CD8-positive, alpha-beta T cell (primary cell): ENCODE measurements at regions of chr7 and their contacts with region 1.

Region 1: DNA sequence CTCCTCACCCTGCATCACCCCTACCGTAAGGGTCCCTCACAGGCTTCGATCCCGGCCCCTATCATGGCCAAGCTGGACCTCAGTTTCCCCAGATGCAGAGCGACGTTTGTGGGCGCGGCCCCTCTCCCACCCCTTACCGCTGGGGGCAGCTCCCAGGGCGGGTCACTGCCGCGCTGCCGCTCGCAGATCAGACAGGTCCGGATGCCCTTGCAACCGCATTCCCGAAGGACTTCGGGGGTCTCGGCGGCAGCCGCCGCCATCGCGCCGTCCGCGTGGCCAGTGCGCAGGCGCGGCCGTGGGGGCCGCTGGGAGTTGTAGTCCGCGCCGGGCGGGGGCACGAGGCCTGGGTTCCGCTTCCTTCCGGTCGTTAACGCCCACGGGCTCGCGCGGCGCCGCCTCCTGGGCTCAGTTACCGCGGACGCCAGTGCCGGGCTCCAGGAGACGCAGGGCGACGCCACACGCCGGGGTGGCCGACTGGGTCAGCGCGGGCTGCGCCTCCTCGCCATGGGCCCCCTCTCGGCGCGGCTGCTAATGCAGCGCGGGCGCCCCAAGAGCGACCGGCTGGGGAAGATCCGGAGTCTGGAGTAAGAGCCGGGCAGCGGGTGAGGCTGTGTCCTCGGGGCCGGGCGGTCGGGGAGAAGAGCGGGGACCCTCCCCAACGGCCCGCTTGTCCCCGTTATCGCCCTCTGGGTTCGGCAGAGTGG is at the starts of genes ALKBH4 and LRWD1:
- DNase-seq: peak; percentile 86 to 97 (median 93)
- ATAC-seq: peak; percentile 96
- H3K4me3 ChIP-seq: peak within 1 kb of the TSS; percentile 99 to 100
- H3K4me3 Mint-ChIP-seq: peak within 1 kb of the TSS; percentile 91
- H3K27ac ChIP-seq: peak within 1 kb of the TSS; percentile 71 to 72
- H3K27ac Mint-ChIP-seq: peak within 1 kb of the TSS; percentile 62
- H3K4me1 ChIP-seq: peaks cover 21% of the 10 kb centered on the region
- H3K4me1 Mint-ChIP-seq: peaks cover 40% of the 10 kb centered on the region
- H3K27me3 ChIP-seq: no peaks in the 10 kb centered on the region
- H3K27me3 Mint-ChIP-seq: no peaks in the 10 kb centered on the region
- CTCF ChIP-seq: no peak
- total RNA-seq, gene ALKBH4: 4.4 to 5.2 TPM
- total RNA-seq, gene LRWD1: 14.9 to 19.1 TPM

Region 2: DNA sequence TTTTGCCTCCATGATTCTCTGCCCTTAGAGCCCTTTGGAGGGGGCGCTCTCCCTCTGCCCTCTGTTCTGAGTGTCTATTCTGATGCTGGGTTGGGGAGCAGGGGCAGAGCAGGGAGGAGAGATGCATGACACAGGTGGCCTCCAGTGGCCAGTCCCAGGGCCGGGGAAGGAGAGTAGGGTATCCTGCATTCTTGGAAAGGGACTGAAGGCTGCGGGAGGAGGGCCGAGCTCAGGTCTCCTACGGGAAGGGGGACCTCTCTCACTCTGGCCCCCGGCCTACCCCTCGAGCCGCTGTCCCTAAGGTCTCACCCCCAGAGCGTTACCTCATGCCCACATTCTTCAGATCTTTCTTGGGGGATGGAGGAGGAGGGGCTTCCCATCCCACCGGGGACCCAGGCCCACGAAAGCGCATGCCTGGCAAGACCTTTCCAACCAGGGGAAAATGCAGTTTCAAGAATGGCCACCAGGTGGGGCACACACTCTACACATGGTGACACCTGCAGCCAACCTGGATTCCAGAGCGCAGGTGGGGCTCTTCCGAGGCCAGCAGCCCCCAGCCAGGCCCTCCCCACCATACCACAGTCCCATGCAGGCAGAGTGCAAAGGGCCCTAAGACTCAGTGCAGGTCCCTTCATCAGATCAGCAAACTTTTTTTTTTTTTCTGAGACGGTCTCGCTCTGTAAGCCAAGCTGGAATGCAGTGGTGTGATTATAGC is 922.0 kb before region 1 on chr7:
- CTCF ChIA-PET with region 1: no interaction called
- POLR2A ChIA-PET with region 1: no interaction called
- intact Hi-C with region 1: loop called in 1 of 2 experiments (anchors 5 kb)
- DNase-seq: peak; percentile 50 to 84 (median 72)
- ATAC-seq: peak; percentile 65
- H3K4me3 ChIP-seq: no peak overlapping the region
- H3K4me3 Mint-ChIP-seq: no peak overlapping the region
- H3K27ac ChIP-seq: no peak overlapping the region
- H3K27ac Mint-ChIP-seq: no peak overlapping the region
- H3K4me1 ChIP-seq: no peaks in the 10 kb centered on the region
- H3K4me1 Mint-ChIP-seq: peaks cover 6% of the 10 kb centered on the region
- H3K27me3 ChIP-seq: no peaks in the 10 kb centered on the region
- H3K27me3 Mint-ChIP-seq: no peaks in the 10 kb centered on the region
- CTCF ChIP-seq: peak; percentile 86

Region 3: DNA sequence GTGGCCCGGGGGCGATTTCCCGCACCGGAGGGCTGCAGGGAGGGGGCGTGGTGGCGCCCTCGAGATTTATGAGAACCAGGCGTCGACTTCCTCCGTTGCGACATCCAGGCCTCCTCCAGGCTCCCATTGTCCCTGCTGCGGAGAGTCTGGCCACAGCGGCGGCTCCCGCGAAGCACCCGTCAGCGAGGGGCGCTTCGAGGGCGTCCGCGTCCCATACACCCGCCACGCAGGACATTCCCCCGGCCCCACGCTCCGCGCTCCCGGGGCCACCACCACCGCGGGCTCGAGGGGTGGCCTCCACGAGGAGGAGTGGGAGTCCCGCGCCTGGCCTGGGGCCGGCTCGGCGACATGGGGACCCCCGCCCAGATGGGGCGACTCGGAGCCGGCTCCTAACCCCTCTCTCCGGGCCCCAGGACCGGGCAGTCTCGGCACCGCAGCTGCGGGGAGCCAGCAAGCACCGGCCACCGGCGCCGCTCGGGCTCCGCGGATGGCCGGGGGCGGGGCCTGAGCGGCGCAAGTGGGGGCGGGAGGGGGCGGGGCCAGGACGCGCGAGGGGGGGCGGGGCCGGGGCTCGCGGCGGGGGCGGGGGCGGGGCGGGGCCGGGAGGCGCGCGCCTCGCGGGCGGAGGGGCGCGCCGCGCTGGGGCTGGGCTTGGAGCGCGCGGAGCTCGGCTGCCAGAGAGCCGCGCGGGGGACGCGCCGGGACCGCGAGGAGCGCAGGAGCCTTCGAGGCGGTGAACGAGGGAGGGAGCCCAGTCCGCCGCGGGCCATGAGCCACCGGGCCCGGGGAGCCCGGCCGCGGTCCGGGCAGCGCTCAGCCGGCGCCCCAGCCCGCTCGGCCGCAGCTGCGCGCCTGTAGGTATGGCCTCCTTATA is 178.3 kb before region 1 on chr7 and contains the start of gene SH2B2:
- CTCF ChIA-PET with region 1: no interaction called
- POLR2A ChIA-PET with region 1: no interaction called
- intact Hi-C with region 1: loop called (anchors 5 to 10 kb)
- DNase-seq: peak in 8 of 9 experiments; percentile 14 to 76 (median 42)
- ATAC-seq: peak; percentile 54
- H3K4me3 ChIP-seq: peak within 1 kb of the TSS; percentile 64 to 73
- H3K4me3 Mint-ChIP-seq: peak within 1 kb of the TSS; percentile 80
- H3K27ac ChIP-seq: no peak within 1 kb of the TSS
- H3K27ac Mint-ChIP-seq: no peak within 1 kb of the TSS
- H3K4me1 ChIP-seq: peaks cover 40% of the 10 kb centered on the region
- H3K4me1 Mint-ChIP-seq: peaks cover 27% of the 10 kb centered on the region
- H3K27me3 ChIP-seq: no peaks in the 10 kb centered on the region
- H3K27me3 Mint-ChIP-seq: peaks cover 2% of the 10 kb centered on the region
- CTCF ChIP-seq: no peak
- total RNA-seq, gene SH2B2: 0.72 to 1.8 TPM

Region 4: GRCh38 chr7:102404005-102404861 is 60.5 kb before region 1 on chr7:
- CTCF ChIA-PET with region 1: interaction called, 19 read pairs
- POLR2A ChIA-PET with region 1: no interaction called
- intact Hi-C with region 1: loop called (anchors 2 kb)
- DNase-seq: peak in 7 of 9 experiments; percentile 32 to 83 (median 56)
- ATAC-seq: peak; percentile 100
- H3K4me3 ChIP-seq: no peak overlapping the region
- H3K4me3 Mint-ChIP-seq: no peak overlapping the region
- H3K27ac ChIP-seq: no peak overlapping the region
- H3K27ac Mint-ChIP-seq: no peak overlapping the region
- H3K4me1 ChIP-seq: no peaks in the 10 kb centered on the region
- H3K4me1 Mint-ChIP-seq: peaks cover 13% of the 10 kb centered on the region
- H3K27me3 ChIP-seq: no peaks in the 10 kb centered on the region
- H3K27me3 Mint-ChIP-seq: no peaks in the 10 kb centered on the region
- CTCF ChIP-seq: peak; percentile 75

Region 5: GRCh38 chr7:102425639-102426267 is 39.0 kb before region 1 on chr7:
- CTCF ChIA-PET with region 1: interaction called, 4 read pairs
- POLR2A ChIA-PET with region 1: interaction called, 13 read pairs
- intact Hi-C with region 1: no loop called
- DNase-seq: peak; percentile 72 to 96 (median 87)
- ATAC-seq: peak; percentile 78
- H3K4me3 ChIP-seq: peak overlapping the region; percentile 34 to 43
- H3K4me3 Mint-ChIP-seq: peak overlapping the region; percentile 80
- H3K27ac ChIP-seq: peak overlapping the region; percentile 99
- H3K27ac Mint-ChIP-seq: peak overlapping the region; percentile 100
- H3K4me1 ChIP-seq: peaks cover 82% of the 10 kb centered on the region
- H3K4me1 Mint-ChIP-seq: peaks cover 77% of the 10 kb centered on the region
- H3K27me3 ChIP-seq: no peaks in the 10 kb centered on the region
- H3K27me3 Mint-ChIP-seq: no peaks in the 10 kb centered on the region
- CTCF ChIP-seq: no peak

Region 6: GRCh38 chr7:102440078-102440795 is 24.5 kb before region 1 on chr7:
- CTCF ChIA-PET with region 1: interaction called, 4 read pairs
- POLR2A ChIA-PET with region 1: no interaction called
- intact Hi-C with region 1: loop called in 1 of 2 experiments (anchors 1 kb)
- DNase-seq: no peak
- ATAC-seq: no peak
- H3K4me3 ChIP-seq: no peak overlapping the region
- H3K4me3 Mint-ChIP-seq: no peak overlapping the region
- H3K27ac ChIP-seq: no peak overlapping the region
- H3K27ac Mint-ChIP-seq: no peak overlapping the region
- H3K4me1 ChIP-seq: no peaks in the 10 kb centered on the region
- H3K4me1 Mint-ChIP-seq: peaks cover 6% of the 10 kb centered on the region
- H3K27me3 ChIP-seq: no peaks in the 10 kb centered on the region
- H3K27me3 Mint-ChIP-seq: no peaks in the 10 kb centered on the region
- CTCF ChIP-seq: no peak